GM10248 (cell line): ENCODE measurements at regions of chr11 and their contacts with region 1.

Region 1: DNA sequence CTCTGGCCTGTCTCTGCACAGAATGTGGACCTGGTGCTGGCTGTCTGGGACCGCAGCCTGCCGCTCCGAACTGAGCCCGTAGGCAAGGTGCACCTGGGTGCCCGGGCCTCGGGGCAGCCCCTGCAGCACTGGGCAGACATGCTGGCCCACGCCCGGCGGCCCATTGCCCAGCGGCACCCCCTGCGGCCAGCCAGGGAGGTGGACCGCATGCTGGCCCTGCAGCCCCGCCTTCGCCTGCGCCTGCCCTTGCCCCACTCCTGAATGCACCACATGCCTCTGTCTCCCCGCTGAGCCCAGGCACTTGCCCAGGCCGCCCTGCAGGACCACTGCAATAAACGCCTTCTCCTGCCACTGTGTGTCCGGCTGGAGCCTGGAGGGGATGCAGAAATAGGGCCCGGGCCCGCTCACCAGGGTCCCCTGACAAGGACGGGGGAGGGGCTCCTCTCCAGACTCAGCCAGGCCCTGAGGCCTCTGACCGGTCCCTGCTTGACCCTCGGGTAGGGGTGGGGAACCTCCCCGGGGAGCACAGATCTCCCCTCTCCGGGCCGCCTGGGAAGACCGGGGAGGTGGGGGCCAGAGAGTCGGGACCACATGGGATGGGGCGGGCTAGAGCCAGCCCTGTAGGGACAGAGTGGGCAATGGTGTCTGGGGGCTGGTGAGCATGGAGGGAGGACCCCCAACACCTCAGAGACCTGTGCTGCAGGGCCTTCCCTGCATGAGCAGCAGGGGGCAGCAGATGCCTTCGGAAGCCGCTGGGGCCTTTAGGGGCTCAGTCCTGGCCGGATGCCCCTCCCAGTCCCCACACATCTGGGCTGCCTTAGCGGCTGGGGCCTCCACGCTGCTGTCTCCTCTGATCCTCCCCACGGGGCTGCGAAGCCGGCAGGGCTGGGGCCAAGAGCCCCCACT is 1.4 kb upstream of the TNNI2 start:
- DNase-seq: peak; percentile 89
- CTCF ChIP-seq: peak; percentile 94

Region 2: DNA sequence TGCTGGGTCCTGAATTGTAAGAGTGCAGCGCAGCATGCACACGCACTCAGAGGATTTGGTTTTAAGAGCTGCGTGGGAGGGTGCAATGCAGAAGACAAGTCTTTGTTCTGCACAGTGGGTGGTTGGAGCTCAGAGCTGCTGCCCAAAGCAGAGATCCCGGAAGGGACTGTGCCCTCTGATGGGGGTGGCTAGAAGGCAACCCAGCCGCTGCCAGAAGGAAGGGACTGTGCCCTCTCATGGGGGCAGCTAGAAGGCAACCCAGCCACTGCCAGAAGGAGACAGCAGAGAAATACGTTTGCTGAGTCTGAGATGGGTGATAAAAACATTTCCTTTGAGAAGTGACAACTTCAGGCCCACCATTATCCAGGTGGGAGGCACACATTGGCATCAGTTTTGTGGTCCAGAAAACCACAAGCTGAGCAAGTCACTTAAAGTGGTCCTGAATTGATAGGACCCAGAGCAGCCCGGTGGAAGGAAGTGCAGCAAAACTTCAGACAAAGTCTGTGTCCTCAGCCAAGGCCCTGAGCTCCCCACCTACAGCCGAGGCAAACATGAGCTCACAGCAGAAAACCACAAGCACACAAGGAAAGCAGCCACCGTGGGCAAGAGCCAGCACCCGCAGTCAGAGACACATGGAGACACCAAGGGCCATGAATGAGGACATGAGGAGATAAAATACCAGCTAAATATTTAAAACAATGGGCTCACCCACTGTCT is 136.2 kb before region 1 on chr11:
- CTCF ChIA-PET with region 1: interaction called, 85 read pairs
- POLR2A ChIA-PET with region 1: no interaction called
- DNase-seq: no peak
- CTCF ChIP-seq: no peak

Region 3: GRCh38 chr11:2002807-2003206 is 165.4 kb after region 1 on chr11:
- CTCF ChIA-PET with region 1: interaction called, 76 read pairs
- POLR2A ChIA-PET with region 1: no interaction called
- DNase-seq: no peak
- CTCF ChIP-seq: no peak